Endothelial cell of umbilical vein (primary cell): ENCODE measurements at regions of chr1 and their contacts with region 1.

Region 1: GRCh38 chr1:240611619-240612480 is at the start of gene GREM2:
- DNase-seq: peak; percentile 5
- H3K4me3 ChIP-seq: peak within 1 kb of the TSS in 2 of 3 experiments; percentile 30 to 41
- H3K27ac ChIP-seq: no peak within 1 kb of the TSS
- H3K4me1 ChIP-seq: no peaks in the 10 kb centered on the region
- H3K27me3 ChIP-seq: peaks cover 0 to 2% of the 10 kb centered on the region in 2 experiments
- CTCF ChIP-seq: no peak
- POLR2A ChIP-seq: no peak
- total RNA-seq, gene GREM2: not detected in 2 replicates

Region 2: GRCh38 chr1:240455228-240455821 is 156.5 kb before region 1 on chr1:
- CTCF ChIA-PET with region 1: no interaction called
- POLR2A ChIA-PET with region 1: no interaction called
- dilution Hi-C with region 1: no loop called
- intact Hi-C with region 1: loop called (anchors 10 kb)
- DNase-seq: no peak
- H3K4me3 ChIP-seq: no peak overlapping the region
- H3K27ac ChIP-seq: no peak overlapping the region
- H3K4me1 ChIP-seq: no peaks in the 10 kb centered on the region
- H3K27me3 ChIP-seq: no peaks in the 10 kb centered on the region
- CTCF ChIP-seq: no peak
- POLR2A ChIP-seq: no peak

Region 3: GRCh38 chr1:240630409-240630808 is 18.6 kb after region 1 on chr1:
- CTCF ChIA-PET with region 1: no interaction called
- POLR2A ChIA-PET with region 1: no interaction called
- dilution Hi-C with region 1: no loop called
- intact Hi-C with region 1: no loop called
- DNase-seq: no peak
- H3K4me3 ChIP-seq: no peak overlapping the region
- H3K27ac ChIP-seq: no peak overlapping the region
- H3K4me1 ChIP-seq: no peaks in the 10 kb centered on the region
- H3K27me3 ChIP-seq: no peaks in the 10 kb centered on the region
- CTCF ChIP-seq: no peak
- POLR2A ChIP-seq: no peak